Activated T-helper 2 cell treated with anti-CD3 and anti-CD28 coated beads, Interferon-gamma antibody, Interleukin-2, Interleukin-4, amounts not matched to agents 10 μg/mL and 5 μg/mL and 100 μg/mL, durations not matched to agents 14 hours and 24 hours and 36 hours (primary cell): ENCODE measurements at regions of chr20 and their contacts with region 1.

Region 1: GRCh38 chr20:52312132-52312729 is 120.7 kb upstream of the ZFP64 start:
- DNase-seq: peak; percentile 31
- H3K4me3 Mint-ChIP-seq: no peak overlapping the region
- H3K27ac Mint-ChIP-seq: no peak overlapping the region
- H3K4me1 Mint-ChIP-seq: peaks cover 12% of the 10 kb centered on the region
- H3K27me3 Mint-ChIP-seq: no peaks in the 10 kb centered on the region

Region 2: GRCh38 chr20:52200870-52201269 is 111.4 kb before region 1 on chr20:
- intact Hi-C with region 1: no loop called
- DNase-seq: no peak
- H3K4me3 Mint-ChIP-seq: no peak overlapping the region
- H3K27ac Mint-ChIP-seq: no peak overlapping the region
- H3K4me1 Mint-ChIP-seq: no peaks in the 10 kb centered on the region
- H3K27me3 Mint-ChIP-seq: no peaks in the 10 kb centered on the region

Region 3: GRCh38 chr20:52405417-52405816 is 93.2 kb after region 1 on chr20:
- intact Hi-C with region 1: loop called (anchors 1 kb)
- DNase-seq: no peak
- H3K4me3 Mint-ChIP-seq: no peak overlapping the region
- H3K27ac Mint-ChIP-seq: peak overlapping the region; percentile 17
- H3K4me1 Mint-ChIP-seq: peaks cover 41% of the 10 kb centered on the region
- H3K27me3 Mint-ChIP-seq: no peaks in the 10 kb centered on the region